Posterior cingulate gyrus (tissue), 11 donors: ENCODE measurements at regions of chr17 and their contacts with region 1.

Region 1: GRCh38 chr17:29369831-29370735 is 20.1 kb upstream of the TAOK1 start:
- DNase-seq: peak in 6 of 10 donors; percentile 35 to 86 (median 46)

Region 2: DNA sequence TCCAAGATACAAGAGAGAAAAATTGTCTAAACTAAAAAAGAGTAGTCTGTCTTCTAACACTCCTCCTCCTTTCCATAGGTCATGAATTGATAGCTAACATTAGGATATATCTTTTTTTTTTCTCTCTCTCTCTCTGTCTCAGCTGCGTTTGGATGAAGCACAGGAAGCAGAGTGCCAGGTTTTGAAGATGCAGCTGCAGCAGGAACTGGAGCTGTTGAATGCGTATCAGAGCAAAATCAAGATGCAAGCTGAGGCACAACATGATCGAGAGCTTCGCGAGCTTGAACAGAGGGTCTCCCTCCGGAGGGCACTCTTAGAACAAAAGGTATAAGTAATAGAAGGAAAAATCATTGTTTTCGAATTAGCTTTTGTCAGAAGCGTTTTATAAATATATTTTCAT is 163.9 kb after region 1 on chr17:
- intact Hi-C with region 1: loop called (anchors 1 kb)
- DNase-seq: peak in 5 of 10 donors; percentile 17 to 68 (median 24)

Region 3: GRCh38 chr17:29572691-29573380 is 202.8 kb after region 1 on chr17:
- intact Hi-C with region 1: loop called (anchors 1 kb)
- DNase-seq: peak in 5 of 10 donors; percentile 56 to 94 (median 90)